ENCODE measurements at regions of chr1 and their contacts with region 1.

Region 1: GRCh38 chr1:225777583-225778336 is at the start of gene SRP9:
- DNase-seq: peak; percentile 98 to 99
- H3K4me3 ChIP-seq: peak within 1 kb of the TSS; percentile 92 to 99 (median 96)
- H3K27ac ChIP-seq: peak within 1 kb of the TSS; percentile 99
- H3K4me1 ChIP-seq: peaks cover 1 to 5% (median 4%) of the 10 kb centered on the region in 4 experiments; a peak in 6 of 7 replicates
- H3K27me3 ChIP-seq: no peaks in the 10 kb centered on the region
- CTCF ChIP-seq: peak; percentile 78 to 96 (median 92)
- EP300 ChIP-seq: no peak
- POLR2A ChIP-seq: peak; percentile 89 to 95
- RAD21 ChIP-seq: peak; percentile 69 to 72
- total RNA-seq, gene SRP9: 446 and 448 TPM in 2 replicates

Region 2: DNA sequence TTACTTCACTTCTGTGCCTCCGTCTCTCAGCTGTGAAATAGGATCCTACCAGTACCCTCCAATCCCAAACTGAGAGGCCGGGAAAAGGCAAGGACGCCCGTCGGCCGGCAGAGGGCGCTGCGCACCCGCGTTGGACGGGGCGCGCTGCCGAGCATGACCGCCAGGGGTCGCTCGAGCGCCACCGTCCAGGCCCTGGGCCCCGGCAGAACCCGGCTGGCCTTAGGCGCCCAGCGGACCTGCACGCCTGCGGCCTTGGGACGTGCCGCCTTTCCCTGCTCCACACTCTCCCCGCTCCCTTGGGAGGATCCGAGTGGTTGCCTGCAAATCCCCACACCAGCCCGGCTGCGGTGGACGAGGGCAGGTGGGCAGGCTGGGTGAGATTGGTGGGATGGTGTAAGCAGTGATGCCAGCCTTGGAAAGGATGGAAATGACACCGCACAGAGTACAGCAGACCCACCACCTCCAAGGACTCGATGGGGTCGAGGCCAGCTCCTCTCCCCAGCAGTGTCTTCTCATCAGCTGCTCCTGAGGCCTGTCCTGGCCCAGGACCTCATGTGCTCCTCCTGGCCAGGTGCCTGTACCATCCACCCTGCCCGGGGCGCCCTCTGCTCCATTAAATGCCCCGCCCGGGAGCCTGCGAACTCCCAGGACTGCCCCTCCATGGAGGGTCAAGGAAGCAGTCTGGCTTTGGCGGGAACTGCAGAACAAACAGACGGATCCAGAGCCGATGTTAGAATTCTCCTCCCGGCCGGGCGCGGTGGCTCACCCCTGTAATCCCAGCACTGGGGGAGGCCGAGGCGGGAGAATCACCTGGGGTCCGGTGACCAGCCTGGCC is 302.6 kb before region 1 on chr1:
- CTCF ChIA-PET with region 1: interaction called, 229 read pairs
- POLR2A ChIA-PET with region 1: interaction called, 20 read pairs
- DNase-seq: peak in 1 of 2 experiments; percentile 96
- H3K4me3 ChIP-seq: no peak overlapping the region
- H3K27ac ChIP-seq: no peak overlapping the region
- H3K4me1 ChIP-seq: peaks cover 0 to 6% (median 1%) of the 10 kb centered on the region in 4 experiments; a peak in 4 of 7 replicates
- H3K27me3 ChIP-seq: no peaks in the 10 kb centered on the region
- CTCF ChIP-seq: peak; percentile 100
- EP300 ChIP-seq: no peak
- POLR2A ChIP-seq: no peak
- RAD21 ChIP-seq: peak; percentile 100

Region 3: DNA sequence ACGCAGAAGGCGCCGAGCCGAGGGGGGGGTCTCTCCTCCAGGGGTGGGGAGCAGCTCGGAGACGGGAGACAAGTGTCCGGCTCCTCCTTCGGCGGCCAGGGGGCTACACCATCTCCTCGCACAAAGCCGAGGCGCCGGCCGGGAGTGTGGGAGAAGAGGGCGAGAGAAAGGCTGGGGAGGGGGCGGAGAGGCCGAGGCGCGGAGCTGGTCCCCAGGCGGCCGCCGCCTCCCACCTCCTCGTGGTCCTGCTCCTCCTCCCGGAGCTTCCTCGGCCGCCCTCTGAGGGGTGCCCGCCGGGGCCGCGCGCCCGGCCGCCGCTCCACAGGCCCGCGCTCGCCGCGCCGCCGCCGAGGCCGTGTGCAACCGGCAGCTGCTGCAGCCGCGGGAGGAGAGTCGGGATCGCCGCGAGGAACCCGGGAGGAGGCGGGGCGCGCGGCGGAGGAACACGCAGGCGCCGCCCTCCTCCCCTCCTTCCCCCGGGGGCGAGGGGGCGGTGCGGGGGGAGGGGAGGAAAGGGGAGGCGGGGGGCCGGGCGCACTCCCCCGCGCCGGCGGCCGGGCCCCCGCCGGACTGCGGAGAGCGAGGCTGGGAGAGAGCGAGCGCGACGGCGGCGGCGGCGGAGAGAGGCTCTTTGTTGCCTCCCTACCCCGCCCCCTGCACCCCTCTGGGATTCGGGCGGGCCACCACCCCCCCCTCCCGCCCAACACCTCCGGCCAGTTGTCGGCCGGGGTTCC is 124.9 kb before region 1 on chr1 and contains the start of gene ENAH:
- CTCF ChIA-PET with region 1: interaction called, 16 read pairs
- POLR2A ChIA-PET with region 1: interaction called, 20 read pairs
- DNase-seq: peak in 1 of 2 experiments; percentile 83
- H3K4me3 ChIP-seq: peak within 1 kb of the TSS; percentile 94 to 100 (median 96)
- H3K27ac ChIP-seq: peak within 1 kb of the TSS; percentile 93
- H3K4me1 ChIP-seq: peaks cover 0 to 3% (median 0%) of the 10 kb centered on the region in 4 experiments; a peak in 2 of 7 replicates
- H3K27me3 ChIP-seq: no peaks in the 10 kb centered on the region
- CTCF ChIP-seq: no peak
- EP300 ChIP-seq: peak in 1 of 2 experiments; percentile 67; a peak in 1 of 3 replicates
- POLR2A ChIP-seq: peak in 1 of 2 experiments; percentile 84; a peak in 2 of 3 replicates
- RAD21 ChIP-seq: no peak
- total RNA-seq, gene ENAH: 318 and 335 TPM in 2 replicates

Region 4: DNA sequence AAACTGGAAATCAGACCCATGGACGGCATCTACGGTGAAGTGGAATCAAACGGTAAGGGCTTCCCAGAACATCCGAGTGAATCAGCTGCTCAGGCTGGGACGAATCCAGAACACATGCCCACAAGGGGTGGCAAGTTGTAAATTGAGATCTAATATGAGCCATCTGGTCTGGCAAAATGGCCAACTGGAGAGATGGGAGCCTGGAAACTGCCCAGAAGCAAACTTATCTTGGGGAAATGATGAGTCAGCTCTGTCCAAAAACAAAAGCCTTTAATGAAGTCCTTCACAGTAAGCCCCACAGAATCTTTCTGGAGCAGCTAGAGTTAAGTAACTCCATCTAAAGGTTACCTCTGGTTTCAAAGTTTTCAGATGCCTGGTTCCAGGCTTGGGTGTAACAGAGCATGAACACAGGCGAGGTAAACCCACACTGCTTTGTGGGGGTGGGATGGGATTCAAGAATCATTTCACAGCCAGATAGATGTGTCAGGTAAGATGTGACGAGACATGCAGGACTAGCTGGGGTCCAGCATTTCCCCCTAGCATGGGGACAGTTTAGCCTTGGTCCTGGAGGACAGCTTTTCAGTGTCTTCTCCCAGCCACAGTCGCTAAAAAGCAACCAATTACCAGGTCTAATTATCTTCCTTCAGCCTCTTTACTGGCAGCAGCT is 10.7 kb before region 1 on chr1:
- CTCF ChIA-PET with region 1: interaction called, 16 read pairs
- POLR2A ChIA-PET with region 1: interaction called, 16 read pairs
- DNase-seq: no peak
- H3K4me3 ChIP-seq: no peak overlapping the region
- H3K27ac ChIP-seq: no peak overlapping the region
- H3K4me1 ChIP-seq: peaks cover 0 to 16% (median 14%) of the 10 kb centered on the region in 4 experiments; a peak in 6 of 7 replicates
- H3K27me3 ChIP-seq: no peaks in the 10 kb centered on the region; a peak in 1 of 7 replicates
- CTCF ChIP-seq: no peak
- EP300 ChIP-seq: no peak
- POLR2A ChIP-seq: no peak
- RAD21 ChIP-seq: no peak

Region 5: GRCh38 chr1:225794954-225795353 is 17.2 kb after region 1 on chr1:
- CTCF ChIA-PET with region 1: interaction called, 4 read pairs
- POLR2A ChIA-PET with region 1: interaction called, 78 read pairs
- DNase-seq: no peak
- H3K4me3 ChIP-seq: no peak overlapping the region
- H3K27ac ChIP-seq: no peak overlapping the region
- H3K4me1 ChIP-seq: no peaks in the 10 kb centered on the region
- H3K27me3 ChIP-seq: no peaks in the 10 kb centered on the region
- CTCF ChIP-seq: no peak
- EP300 ChIP-seq: no peak
- POLR2A ChIP-seq: no peak
- RAD21 ChIP-seq: no peak

Region 6: DNA sequence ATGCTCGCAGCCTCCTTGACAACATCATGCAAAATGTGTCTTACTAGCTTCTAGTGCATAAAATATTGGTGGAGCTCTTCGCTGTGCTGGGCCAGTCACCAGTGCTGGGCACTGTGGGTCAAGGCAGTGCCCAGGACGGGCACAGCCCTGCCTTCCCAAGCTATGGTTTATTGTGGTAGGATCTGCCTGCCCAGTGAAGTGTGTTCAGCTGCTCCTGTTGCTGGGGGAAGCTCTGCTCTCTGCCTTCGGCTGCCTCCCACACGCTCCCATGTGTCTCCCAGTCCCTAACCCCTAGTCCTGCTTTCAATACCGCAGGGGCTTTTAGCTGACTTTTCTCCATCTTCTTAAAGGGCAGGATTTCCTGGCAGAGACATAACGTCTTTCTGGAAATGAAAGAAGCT is 47.8 kb after region 1 on chr1:
- CTCF ChIA-PET with region 1: interaction called, 10 read pairs
- POLR2A ChIA-PET with region 1: interaction called, 3 read pairs
- DNase-seq: no peak
- H3K4me3 ChIP-seq: no peak overlapping the region
- H3K27ac ChIP-seq: no peak overlapping the region
- H3K4me1 ChIP-seq: peaks cover 6 to 17% (median 11%) of the 10 kb centered on the region in 4 experiments; a peak in 6 of 7 replicates
- H3K27me3 ChIP-seq: no peaks in the 10 kb centered on the region
- CTCF ChIP-seq: no peak
- EP300 ChIP-seq: no peak
- POLR2A ChIP-seq: no peak
- RAD21 ChIP-seq: no peak

Region 7: GRCh38 chr1:225999227-225999911 is 221.6 kb after region 1 on chr1 and contains the start of gene SDE2:
- CTCF ChIA-PET with region 1: no interaction called
- POLR2A ChIA-PET with region 1: interaction called, 11 read pairs
- DNase-seq: peak; percentile 98 to 99
- H3K4me3 ChIP-seq: peak within 1 kb of the TSS; percentile 90 to 99 (median 96)
- H3K27ac ChIP-seq: peak within 1 kb of the TSS; percentile 76
- H3K4me1 ChIP-seq: peaks cover 7 to 16% (median 13%) of the 10 kb centered on the region in 4 experiments
- H3K27me3 ChIP-seq: no peaks in the 10 kb centered on the region
- CTCF ChIP-seq: no peak; a peak in 1 of 4 replicates
- EP300 ChIP-seq: peak in 1 of 2 experiments; percentile 83; a peak in 1 of 3 replicates
- POLR2A ChIP-seq: peak; percentile 98 to 99
- RAD21 ChIP-seq: peak in 1 of 2 experiments; percentile 10; a peak in 1 of 4 replicates
- total RNA-seq, gene SDE2: 16.5 and 16.7 TPM in 2 replicates

Measured in H1 (cell line).